Naive thymus-derived CD4-positive, alpha-beta T cell (primary cell): ENCODE measurements at regions of chr6 and their contacts with region 1.

Region 1: DNA sequence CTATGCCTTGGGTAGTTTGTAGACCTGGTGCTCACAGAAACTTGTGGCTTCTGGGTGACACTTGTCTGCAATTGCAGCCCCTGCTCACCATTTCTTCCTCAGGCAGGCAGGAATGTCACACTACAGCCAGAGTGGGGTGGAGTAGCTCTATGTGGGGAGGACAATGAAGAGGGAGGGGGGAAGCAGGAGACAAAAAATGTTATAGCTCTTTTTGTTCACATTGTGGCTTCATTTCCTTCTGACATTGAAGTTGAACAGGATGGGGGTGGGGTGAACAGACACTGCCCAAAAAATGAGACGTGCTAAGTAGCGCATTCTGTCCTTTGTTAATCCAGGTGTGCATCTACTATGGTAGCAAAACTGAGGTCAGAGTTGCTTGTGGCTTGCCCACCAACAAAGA is at the start of gene THEMIS:
- DNase-seq: peak; percentile 9 to 80 (median 73)
- ATAC-seq: peak; percentile 85
- H3K4me3 ChIP-seq: peak within 1 kb of the TSS; percentile 77
- H3K4me3 Mint-ChIP-seq: peak within 1 kb of the TSS; percentile 92 to 100 (median 98)
- H3K27ac ChIP-seq: peak within 1 kb of the TSS; percentile 77
- H3K27ac Mint-ChIP-seq: peak within 1 kb of the TSS; percentile 88 to 100 (median 95)
- H3K4me1 ChIP-seq: peaks cover 8 to 38% of the 10 kb centered on the region in 2 donors
- H3K4me1 Mint-ChIP-seq: peaks cover 22 to 72% (median 56%) of the 10 kb centered on the region in 7 donors
- H3K27me3 ChIP-seq: no peaks in the 10 kb centered on the region
- H3K27me3 Mint-ChIP-seq: no peaks in the 10 kb centered on the region
- total RNA-seq, gene THEMIS: 51.3 to 97.3 (median 54.7) TPM

Region 2: GRCh38 chr6:126824226-126824625 is 1076.7 kb before region 1 on chr6:
- CTCF ChIA-PET with region 1: no interaction called
- POLR2A ChIA-PET with region 1: no interaction called
- intact Hi-C with region 1: no loop called
- DNase-seq: no peak
- ATAC-seq: no peak
- H3K4me3 ChIP-seq: no peak overlapping the region
- H3K4me3 Mint-ChIP-seq: no peak overlapping the region
- H3K27ac ChIP-seq: no peak overlapping the region
- H3K27ac Mint-ChIP-seq: no peak overlapping the region
- H3K4me1 ChIP-seq: no peaks in the 10 kb centered on the region
- H3K4me1 Mint-ChIP-seq: no peaks in the 10 kb centered on the region
- H3K27me3 ChIP-seq: no peaks in the 10 kb centered on the region
- H3K27me3 Mint-ChIP-seq: no peaks in the 10 kb centered on the region

Region 3: DNA sequence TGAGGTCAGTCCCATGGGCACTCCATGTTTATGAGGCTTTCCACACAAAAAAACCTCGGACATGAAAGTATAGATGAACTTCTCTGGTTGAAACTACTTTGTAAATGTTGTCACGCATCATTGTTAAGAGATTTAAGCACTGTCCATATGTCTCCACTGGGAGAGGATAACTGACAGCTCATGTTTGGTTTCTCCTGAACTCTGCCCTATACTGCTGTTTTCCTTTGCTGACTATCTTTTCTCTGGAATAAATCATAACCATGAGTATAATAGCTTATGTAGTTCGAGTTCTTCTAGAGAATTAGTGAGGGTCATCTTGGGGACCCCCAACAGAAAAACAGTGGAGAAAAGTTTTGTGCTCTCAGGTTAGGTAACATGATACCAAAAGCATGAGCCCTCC is 14.3 kb before region 1 on chr6:
- CTCF ChIA-PET with region 1: interaction called, 4 read pairs
- POLR2A ChIA-PET with region 1: interaction called, 3 read pairs
- intact Hi-C with region 1: loop called in 1 of 2 experiments (anchors 1 kb)
- DNase-seq: no peak
- ATAC-seq: no peak
- H3K4me3 ChIP-seq: no peak overlapping the region
- H3K4me3 Mint-ChIP-seq: peak overlapping the region in 4 of 10 donors; percentile 1 to 55 (median 30)
- H3K27ac ChIP-seq: no peak overlapping the region
- H3K27ac Mint-ChIP-seq: peak overlapping the region in 3 of 9 donors; percentile 21 to 66 (median 50)
- H3K4me1 ChIP-seq: peaks cover 27 to 53% of the 10 kb centered on the region in 2 donors
- H3K4me1 Mint-ChIP-seq: peaks cover 23 to 89% (median 77%) of the 10 kb centered on the region in 7 donors
- H3K27me3 ChIP-seq: no peaks in the 10 kb centered on the region
- H3K27me3 Mint-ChIP-seq: no peaks in the 10 kb centered on the region

Region 4: DNA sequence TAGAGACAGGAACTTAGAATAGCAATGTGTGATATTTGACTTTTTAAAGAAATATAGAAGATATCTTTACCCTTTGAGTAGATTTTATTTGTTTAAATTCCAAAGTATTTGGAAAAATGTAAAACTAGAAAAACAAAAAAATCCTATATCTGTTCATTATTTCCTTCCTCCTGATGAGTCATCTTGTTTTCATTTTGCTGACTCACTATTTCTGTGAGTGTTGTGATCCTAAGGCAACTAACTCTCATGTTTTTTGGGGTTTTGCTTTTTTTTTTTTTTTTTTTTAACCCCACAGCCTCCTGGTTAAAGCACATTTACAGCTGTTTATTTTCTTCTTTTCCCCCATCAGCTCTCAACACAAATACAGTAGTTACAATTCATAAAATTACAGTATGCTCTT is 37.8 kb after region 1 on chr6:
- CTCF ChIA-PET with region 1: interaction called, 13 read pairs
- POLR2A ChIA-PET with region 1: interaction called, 10 read pairs
- intact Hi-C with region 1: loop called (anchors 1 kb)
- DNase-seq: no peak
- ATAC-seq: no peak
- H3K4me3 ChIP-seq: no peak overlapping the region
- H3K4me3 Mint-ChIP-seq: peak overlapping the region in 2 of 10 donors; percentile 14 to 39
- H3K27ac ChIP-seq: no peak overlapping the region
- H3K27ac Mint-ChIP-seq: peak overlapping the region in 5 of 9 donors; percentile 28 to 97 (median 57)
- H3K4me1 ChIP-seq: peaks cover 25 to 40% of the 10 kb centered on the region in 2 donors
- H3K4me1 Mint-ChIP-seq: peaks cover 21 to 81% (median 63%) of the 10 kb centered on the region in 7 donors
- H3K27me3 ChIP-seq: no peaks in the 10 kb centered on the region
- H3K27me3 Mint-ChIP-seq: no peaks in the 10 kb centered on the region

Region 5: DNA sequence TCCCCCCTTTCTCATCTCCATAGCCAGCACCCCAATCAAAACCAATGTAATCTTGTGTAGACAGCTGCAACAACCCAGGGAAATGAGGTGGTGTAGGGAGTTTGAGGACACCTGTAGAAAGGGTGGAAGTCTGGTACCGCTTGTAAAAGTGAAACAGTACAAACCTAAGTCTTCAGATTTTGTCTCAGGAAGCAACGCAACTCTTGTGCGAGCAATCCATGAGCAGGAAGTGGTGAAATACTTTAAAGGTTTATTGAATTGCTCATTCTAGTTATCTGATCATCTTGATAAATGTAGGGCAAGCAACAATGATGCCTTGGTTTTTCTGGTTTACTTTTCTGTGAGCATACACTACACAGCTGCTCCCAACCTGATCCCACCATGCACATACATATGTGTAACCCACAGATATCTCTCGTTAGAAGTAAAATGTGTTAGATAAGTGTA is 71.0 kb after region 1 on chr6:
- CTCF ChIA-PET with region 1: interaction called, 13 read pairs
- POLR2A ChIA-PET with region 1: interaction called, 8 read pairs
- intact Hi-C with region 1: loop called (anchors 1 kb)
- DNase-seq: peak; percentile 9 to 89 (median 84)
- ATAC-seq: peak; percentile 92
- H3K4me3 ChIP-seq: peak overlapping the region; percentile 43
- H3K4me3 Mint-ChIP-seq: peak overlapping the region; percentile 73 to 96 (median 88)
- H3K27ac ChIP-seq: peak overlapping the region; percentile 83
- H3K27ac Mint-ChIP-seq: peak overlapping the region; percentile 71 to 99 (median 97)
- H3K4me1 ChIP-seq: peaks cover 36 to 49% of the 10 kb centered on the region in 2 donors
- H3K4me1 Mint-ChIP-seq: peaks cover 15 to 83% (median 68%) of the 10 kb centered on the region in 7 donors
- H3K27me3 ChIP-seq: no peaks in the 10 kb centered on the region
- H3K27me3 Mint-ChIP-seq: no peaks in the 10 kb centered on the region

Region 6: GRCh38 chr6:128520436-128521281 is 619.7 kb after region 1 on chr6 and contains the start of gene PTPRK:
- CTCF ChIA-PET with region 1: no interaction called
- POLR2A ChIA-PET with region 1: no interaction called
- intact Hi-C with region 1: loop called in 1 of 2 experiments (anchors 1 kb)
- DNase-seq: peak; percentile 70 to 90 (median 87)
- ATAC-seq: peak; percentile 95
- H3K4me3 ChIP-seq: peak within 1 kb of the TSS; percentile 77
- H3K4me3 Mint-ChIP-seq: peak within 1 kb of the TSS; percentile 90 to 98 (median 94)
- H3K27ac ChIP-seq: peak within 1 kb of the TSS; percentile 59
- H3K27ac Mint-ChIP-seq: peak within 1 kb of the TSS; percentile 73 to 94 (median 82)
- H3K4me1 ChIP-seq: peaks cover 5 to 17% of the 10 kb centered on the region in 2 donors
- H3K4me1 Mint-ChIP-seq: peaks cover 8 to 22% (median 14%) of the 10 kb centered on the region in 7 donors
- H3K27me3 ChIP-seq: no peaks in the 10 kb centered on the region
- H3K27me3 Mint-ChIP-seq: peaks cover 52 to 89% (median 68%) of the 10 kb centered on the region in 5 donors
- total RNA-seq, gene PTPRK: 1.6 to 6.5 (median 3.9) TPM